ENCODE measurements at regions of chr5 and their contacts with region 1.

Region 1: DNA sequence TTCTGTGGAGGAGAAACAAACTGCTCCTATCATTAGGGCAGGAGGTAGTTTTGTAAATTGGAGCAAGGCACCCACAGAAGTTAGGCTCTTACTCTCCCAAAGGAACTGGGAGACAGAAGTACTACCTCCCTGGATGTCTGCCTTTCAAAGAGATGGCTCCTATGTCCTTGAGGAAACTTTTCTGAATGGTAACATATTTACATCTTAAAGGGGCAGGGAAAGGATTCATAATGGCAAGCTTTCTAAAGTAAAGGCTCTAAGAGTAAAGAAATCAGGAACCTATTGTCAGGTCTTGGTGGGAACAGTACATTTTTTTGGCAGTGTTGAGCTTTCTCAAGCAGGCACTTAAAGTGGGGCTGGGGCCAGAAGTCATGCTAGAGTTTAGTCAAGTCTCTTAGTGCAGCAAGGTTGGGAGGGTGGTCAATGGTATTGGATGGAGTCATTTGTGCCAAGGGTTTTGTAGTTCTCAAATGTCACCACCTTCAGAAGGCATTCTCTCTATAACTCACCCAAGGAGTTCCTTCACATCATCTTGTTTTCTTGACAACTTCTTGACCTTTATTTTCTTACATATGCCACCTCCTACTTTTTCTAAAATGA is 26.3 kb upstream of the NDFIP1 start:
- DNase-seq: no peak
- H3K4me3 ChIP-seq: no peak overlapping the region
- H3K27ac ChIP-seq: no peak overlapping the region
- H3K4me1 ChIP-seq: no peaks in the 10 kb centered on the region
- H3K27me3 ChIP-seq: peaks cover 7 to 19% of the 10 kb centered on the region in 2 experiments
- CTCF ChIP-seq: no peak
- POLR2A ChIP-seq: no peak

Region 2: DNA sequence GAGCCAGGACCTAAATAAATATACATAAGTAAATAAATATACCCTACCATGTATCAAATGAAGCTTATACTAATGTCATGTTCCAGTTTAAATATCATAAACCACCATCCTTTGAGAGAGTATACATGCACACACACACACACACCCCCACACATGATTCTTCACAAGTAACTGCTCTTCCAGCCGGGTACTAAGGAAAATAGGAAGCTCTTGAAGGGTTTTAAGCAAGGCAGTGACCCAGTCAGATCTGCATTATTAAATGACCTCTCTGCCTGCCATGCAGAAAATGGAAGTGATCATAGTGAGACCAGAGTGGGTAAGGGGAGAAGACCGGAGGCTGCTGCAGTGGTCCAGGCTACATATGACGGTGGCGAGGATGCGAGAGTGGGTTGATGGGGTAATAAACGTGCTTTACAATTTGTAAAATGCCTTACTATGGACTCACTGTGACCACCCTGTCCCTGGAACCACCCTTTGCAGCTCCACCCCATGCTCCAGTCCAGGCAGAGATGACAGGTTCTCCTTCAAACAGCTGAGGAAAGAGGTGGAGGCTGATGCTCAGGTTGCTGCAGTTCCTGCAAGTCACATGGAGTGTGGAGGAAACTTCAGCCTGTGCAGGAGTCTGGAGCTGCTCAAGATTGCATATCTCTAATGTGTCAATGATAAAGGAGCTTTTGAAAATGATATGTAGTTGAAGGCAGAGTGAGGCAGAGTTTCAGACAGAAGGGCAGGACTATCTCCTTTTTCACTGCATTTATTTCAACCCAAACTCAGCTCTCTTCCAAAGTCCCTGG is 12.5 kb before region 1 on chr5:
- CTCF ChIA-PET with region 1: interaction called, 8 read pairs
- POLR2A ChIA-PET with region 1: no interaction called
- dilution Hi-C with region 1: no loop called
- intact Hi-C with region 1: loop called (anchors 2 kb)
- DNase-seq: no peak
- H3K4me3 ChIP-seq: no peak overlapping the region
- H3K27ac ChIP-seq: no peak overlapping the region
- H3K4me1 ChIP-seq: no peaks in the 10 kb centered on the region
- H3K27me3 ChIP-seq: peaks cover 8 to 10% of the 10 kb centered on the region in 2 experiments
- CTCF ChIP-seq: no peak
- POLR2A ChIP-seq: no peak

Measured in endothelial cell of umbilical vein (primary cell).